ENCODE measurements at regions of chr16 and their contacts with region 1.

Region 1: GRCh38 chr16:74309789-74310781 is 13.5 kb downstream of the PSMD7 start:
- DNase-seq: peak; percentile 65
- H3K27ac ChIP-seq: no peak overlapping the region
- CTCF ChIP-seq: peak; percentile 81

Region 2: DNA sequence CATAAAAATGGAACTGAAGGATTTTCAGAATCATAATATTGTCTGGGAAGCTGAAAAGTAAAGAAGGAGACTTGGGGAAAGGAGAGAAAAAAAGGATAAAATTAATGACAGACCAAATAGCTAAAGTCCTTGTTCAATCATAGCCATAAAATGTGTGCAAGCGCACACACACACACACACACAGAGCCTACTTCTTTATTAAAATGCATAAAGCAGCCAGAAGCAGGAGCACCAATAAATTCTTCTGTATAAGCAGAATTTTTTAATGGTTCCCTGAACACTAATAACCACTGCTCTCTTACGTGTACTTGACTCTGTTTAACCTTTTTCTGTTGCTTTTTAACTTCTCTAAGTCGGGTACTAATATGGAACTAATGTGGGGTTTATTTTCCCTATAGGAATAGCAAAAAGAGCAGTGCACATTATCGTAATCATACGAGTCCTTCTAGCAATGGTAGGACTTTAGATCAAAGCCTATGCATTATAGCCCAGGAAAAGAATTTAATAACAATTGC is 144.5 kb before region 1 on chr16:
- CTCF ChIA-PET with region 1: no interaction called
- POLR2A ChIA-PET with region 1: no interaction called
- DNase-seq: no peak
- H3K27ac ChIP-seq: no peak overlapping the region
- CTCF ChIP-seq: no peak

Region 3: DNA sequence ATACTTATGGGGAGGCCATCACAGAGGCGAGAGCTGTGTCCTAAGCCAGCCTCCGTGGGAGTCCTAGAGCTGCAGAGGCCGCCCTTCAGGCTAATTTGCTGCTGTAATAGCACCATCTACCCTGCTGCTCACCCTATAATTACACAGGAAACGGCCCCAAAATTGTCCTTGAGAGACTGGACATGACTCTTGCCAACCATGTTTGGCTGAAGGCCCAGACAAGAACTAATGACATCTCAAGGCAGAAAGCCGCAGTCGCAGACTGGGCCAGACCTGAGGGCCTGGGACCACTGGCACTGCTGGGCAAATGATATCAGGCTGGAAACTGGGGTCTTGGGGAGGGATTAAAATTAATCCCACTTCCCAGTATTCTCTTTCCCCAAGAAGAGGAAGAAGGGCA is 10.6 kb after region 1 on chr16:
- CTCF ChIA-PET with region 1: interaction called, 14 read pairs
- POLR2A ChIA-PET with region 1: no interaction called
- DNase-seq: no peak
- H3K27ac ChIP-seq: no peak overlapping the region
- CTCF ChIP-seq: no peak

Region 4: DNA sequence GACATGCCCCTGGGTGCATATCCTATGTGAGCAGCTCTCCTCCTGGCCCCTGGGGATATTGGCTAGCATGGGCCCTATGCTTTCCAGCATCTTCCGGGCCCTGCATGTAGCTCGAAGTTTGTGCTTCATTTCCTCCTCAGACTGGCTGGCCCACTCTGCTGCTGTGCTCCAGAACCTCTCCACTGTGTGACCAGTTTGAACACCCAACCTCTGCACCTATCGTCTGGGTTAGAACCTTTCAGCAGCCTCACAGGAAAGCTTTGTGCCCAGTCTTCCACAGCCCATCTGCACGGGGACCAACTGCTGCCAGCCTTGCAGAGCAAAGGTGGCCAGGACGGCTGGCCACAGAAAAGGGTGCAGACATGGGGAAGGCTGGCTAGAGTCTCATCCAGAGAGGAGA is 121.4 kb after region 1 on chr16:
- CTCF ChIA-PET with region 1: interaction called, 10 read pairs
- POLR2A ChIA-PET with region 1: no interaction called
- DNase-seq: no peak
- H3K27ac ChIP-seq: peak overlapping the region; percentile 65
- CTCF ChIP-seq: no peak